ENCODE measurements at regions of chr15 and their contacts with region 1.

Region 1: DNA sequence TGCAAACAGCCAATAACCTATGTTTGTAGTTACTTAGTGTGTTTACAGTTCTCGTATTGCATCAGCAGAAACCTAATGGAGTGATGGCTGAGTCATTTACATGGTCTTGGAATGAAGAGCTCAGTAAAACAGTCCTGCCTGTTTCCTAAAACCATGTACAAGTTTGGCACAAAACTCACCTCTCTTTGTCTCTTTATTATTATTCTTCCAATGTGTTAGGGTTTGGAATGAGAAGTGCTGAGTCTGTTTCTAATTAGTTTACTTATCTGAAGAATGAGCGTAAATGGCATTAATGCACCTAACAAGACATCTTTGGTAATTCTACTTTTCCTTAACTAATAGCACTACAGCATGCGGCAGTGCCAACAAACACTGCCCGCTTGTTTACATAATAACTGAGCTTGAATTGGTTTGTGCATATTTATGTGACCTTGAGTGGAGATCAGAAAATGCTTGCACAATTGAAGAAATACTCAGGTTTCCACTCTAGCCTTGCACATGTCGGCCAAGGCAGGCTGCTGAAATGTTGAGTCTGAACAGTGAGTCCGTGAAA is 385.4 kb upstream of the SEMA6D start:
- DNase-seq: no peak
- H3K4me3 ChIP-seq: no peak overlapping the region
- H3K27ac ChIP-seq: no peak overlapping the region
- H3K4me1 ChIP-seq: no peaks in the 10 kb centered on the region
- H3K27me3 ChIP-seq: no peaks in the 10 kb centered on the region
- CTCF ChIP-seq: no peak
- EP300 ChIP-seq: no peak
- POLR2A ChIP-seq: no peak

Region 2: GRCh38 chr15:46918462-46919135 is 413.3 kb before region 1 on chr15:
- in situ Hi-C with region 1: no loop called
- intact Hi-C with region 1: no loop called
- DNase-seq: no peak
- H3K4me3 ChIP-seq: no peak overlapping the region
- H3K27ac ChIP-seq: no peak overlapping the region
- H3K4me1 ChIP-seq: no peaks in the 10 kb centered on the region
- H3K27me3 ChIP-seq: no peaks in the 10 kb centered on the region
- CTCF ChIP-seq: no peak
- EP300 ChIP-seq: no peak
- POLR2A ChIP-seq: no peak

Region 3: GRCh38 chr15:47431501-47431900 is 99.6 kb after region 1 on chr15:
- in situ Hi-C with region 1: loop called in 1 of 4 experiments (anchors 25 kb)
- intact Hi-C with region 1: no loop called
- DNase-seq: no peak
- H3K4me3 ChIP-seq: no peak overlapping the region
- H3K27ac ChIP-seq: no peak overlapping the region
- H3K4me1 ChIP-seq: no peaks in the 10 kb centered on the region
- H3K27me3 ChIP-seq: no peaks in the 10 kb centered on the region
- CTCF ChIP-seq: no peak
- EP300 ChIP-seq: no peak
- POLR2A ChIP-seq: no peak

Measured in transverse colon (tissue), 4 donors.